Panc1 (cell line): ENCODE measurements at regions of chr1 and their contacts with region 1.

Region 1: DNA sequence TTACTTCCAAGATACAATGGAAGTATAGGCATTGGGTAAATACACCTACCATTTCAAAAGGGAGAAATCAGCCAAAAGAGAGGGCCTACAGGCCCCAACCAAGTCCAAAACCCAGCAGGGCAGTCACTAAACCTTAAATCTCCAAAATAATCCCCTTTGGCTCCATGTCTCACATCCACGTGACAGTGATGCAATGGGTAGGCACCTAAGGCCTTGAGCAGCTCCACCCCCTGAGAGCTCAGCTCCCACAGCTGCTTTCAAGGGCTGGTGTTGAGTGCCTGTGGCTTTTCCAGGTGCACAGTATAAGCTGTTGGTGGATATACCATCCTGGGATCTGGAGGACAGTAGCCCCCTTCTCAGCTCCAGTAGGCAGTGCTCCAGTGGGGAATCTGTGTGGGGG is 72.5 kb downstream of the UROD start:
- DNase-seq: no peak
- ATAC-seq: no peak
- H3K4me3 ChIP-seq: no peak overlapping the region
- H3K27ac ChIP-seq: no peak overlapping the region
- H3K4me1 ChIP-seq: no peaks in the 10 kb centered on the region
- H3K27me3 ChIP-seq: no peaks in the 10 kb centered on the region
- CTCF ChIP-seq: no peak

Region 2: DNA sequence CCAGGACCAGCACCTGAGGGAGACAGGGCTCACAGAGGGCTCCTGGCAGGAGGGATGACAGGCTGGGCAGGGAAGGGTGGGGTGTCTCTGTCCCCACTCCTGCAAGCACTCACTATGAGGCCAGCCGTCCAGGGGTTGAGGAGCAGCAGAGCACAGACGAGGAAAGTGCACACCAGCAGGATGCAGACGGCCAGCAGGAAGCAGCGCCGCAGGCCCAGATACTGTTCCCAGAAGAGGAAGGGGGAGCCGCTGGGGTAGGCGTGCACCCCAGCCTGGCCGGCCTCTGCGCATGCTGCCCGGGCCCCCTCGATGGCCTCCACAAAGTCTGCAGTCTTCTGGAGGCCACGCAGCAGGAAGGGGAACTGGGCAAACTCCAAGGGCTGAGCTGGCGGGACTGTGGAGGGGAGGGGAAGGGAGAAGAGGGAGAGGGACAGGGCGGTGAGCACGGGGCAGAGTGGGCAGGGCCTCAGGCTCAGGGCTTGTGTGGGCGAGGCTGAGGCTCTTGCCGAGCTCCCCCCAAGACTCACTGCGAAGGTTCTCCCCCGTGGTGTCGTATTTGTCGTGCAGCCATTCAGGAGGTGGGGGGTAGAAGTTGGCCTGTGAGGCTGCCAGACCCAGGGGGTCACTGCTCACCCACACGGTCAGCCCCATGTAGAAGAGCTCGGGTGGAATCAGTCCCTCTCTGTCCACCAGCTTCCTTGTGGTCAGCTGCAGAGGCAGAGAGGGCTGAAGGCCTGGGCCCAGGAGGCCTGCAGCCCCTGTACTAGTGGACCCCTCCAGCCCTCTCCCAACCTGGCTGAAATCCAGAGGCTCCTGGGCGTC is 258.0 kb before region 1 on chr1:
- CTCF ChIA-PET with region 1: no interaction called
- POLR2A ChIA-PET with region 1: interaction called, 11 read pairs
- in situ Hi-C with region 1: no loop called
- intact Hi-C with region 1: no loop called
- DNase-seq: no peak
- ATAC-seq: no peak
- H3K4me3 ChIP-seq: no peak overlapping the region
- H3K27ac ChIP-seq: no peak overlapping the region
- H3K4me1 ChIP-seq: no peaks in the 10 kb centered on the region
- H3K27me3 ChIP-seq: no peaks in the 10 kb centered on the region
- CTCF ChIP-seq: no peak

Region 3: DNA sequence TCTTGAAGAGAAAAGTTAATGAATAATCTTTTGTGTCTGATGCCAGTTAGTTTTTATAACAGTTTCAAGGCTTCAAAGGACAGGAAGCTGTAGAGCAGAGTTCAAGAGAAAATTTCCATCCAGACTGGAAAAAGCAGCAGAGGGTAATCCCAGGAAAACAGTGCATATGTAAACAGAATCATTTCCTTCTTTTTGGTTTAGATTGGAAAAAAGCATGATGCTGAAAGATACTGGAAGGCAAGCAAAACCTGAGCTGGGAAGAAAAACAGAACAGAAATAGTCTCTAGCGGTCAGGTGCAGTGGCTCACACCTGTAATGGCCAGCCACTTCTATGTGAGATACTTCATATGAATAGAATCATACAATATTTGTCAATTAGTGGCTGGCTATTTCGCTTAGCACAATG is 49.9 kb after region 1 on chr1:
- CTCF ChIA-PET with region 1: no interaction called
- POLR2A ChIA-PET with region 1: no interaction called
- in situ Hi-C with region 1: no loop called
- intact Hi-C with region 1: no loop called
- DNase-seq: no peak
- ATAC-seq: no peak
- H3K4me3 ChIP-seq: no peak overlapping the region
- H3K27ac ChIP-seq: no peak overlapping the region
- H3K4me1 ChIP-seq: no peaks in the 10 kb centered on the region
- H3K27me3 ChIP-seq: no peaks in the 10 kb centered on the region
- CTCF ChIP-seq: no peak